Gastrocnemius medialis (tissue), 4 donors: ENCODE measurements at regions of chr4 and their contacts with region 1.

Region 1: DNA sequence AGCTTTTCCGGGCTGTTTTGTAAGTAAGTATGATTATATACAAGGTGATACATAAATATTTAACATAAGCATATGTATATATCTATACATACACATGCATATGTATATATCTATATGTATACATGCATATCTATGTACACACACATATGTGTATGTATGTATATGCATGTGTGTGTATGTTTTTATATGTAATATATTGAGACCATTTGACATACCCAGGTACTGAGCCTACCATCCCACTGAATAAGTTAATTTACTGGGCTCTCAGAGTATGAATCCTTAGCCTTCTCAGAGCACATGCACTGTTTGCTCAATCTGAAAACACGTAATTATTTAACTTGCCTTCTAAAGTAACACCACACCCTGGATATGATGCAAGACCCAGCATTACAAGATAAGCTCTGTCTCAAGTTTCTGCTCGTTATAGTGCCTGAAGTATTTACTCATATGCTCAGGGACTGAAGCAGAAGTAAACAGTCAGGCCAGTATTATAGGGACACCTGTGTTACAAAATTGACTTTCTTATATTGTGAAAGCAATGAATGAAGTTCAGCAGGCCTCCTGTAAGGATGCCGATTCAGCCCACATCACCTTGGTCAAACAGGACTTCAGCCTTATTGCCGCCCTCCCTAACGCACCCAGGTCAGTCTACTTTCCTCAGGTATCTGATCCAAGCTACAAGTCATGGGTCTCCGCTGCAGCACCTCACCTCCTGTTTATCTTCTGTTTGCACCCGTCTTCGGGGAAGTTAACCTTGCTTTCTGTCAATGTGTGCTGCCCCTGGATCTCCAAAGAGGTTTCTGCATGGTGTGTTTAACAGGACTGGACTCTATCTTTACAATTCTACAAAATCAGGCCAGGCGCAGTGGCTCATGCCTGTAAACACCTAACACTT is 43.0 kb upstream of the KLF3 start:
- DNase-seq: peak; percentile 37 to 64
- ATAC-seq: peak; percentile 98 to 99
- H3K4me3 ChIP-seq: no peak overlapping the region
- H3K27ac ChIP-seq: peak overlapping the region; percentile 64 to 86 (median 74)
- H3K4me1 ChIP-seq: peaks cover 13 to 17% of the 10 kb centered on the region in 2 donors
- H3K27me3 ChIP-seq: no peaks in the 10 kb centered on the region
- CTCF ChIP-seq: peak in 1 of 5 experiments; percentile 15
- POLR2A ChIP-seq: peak in 1 of 2 donors; percentile 23

Region 2: DNA sequence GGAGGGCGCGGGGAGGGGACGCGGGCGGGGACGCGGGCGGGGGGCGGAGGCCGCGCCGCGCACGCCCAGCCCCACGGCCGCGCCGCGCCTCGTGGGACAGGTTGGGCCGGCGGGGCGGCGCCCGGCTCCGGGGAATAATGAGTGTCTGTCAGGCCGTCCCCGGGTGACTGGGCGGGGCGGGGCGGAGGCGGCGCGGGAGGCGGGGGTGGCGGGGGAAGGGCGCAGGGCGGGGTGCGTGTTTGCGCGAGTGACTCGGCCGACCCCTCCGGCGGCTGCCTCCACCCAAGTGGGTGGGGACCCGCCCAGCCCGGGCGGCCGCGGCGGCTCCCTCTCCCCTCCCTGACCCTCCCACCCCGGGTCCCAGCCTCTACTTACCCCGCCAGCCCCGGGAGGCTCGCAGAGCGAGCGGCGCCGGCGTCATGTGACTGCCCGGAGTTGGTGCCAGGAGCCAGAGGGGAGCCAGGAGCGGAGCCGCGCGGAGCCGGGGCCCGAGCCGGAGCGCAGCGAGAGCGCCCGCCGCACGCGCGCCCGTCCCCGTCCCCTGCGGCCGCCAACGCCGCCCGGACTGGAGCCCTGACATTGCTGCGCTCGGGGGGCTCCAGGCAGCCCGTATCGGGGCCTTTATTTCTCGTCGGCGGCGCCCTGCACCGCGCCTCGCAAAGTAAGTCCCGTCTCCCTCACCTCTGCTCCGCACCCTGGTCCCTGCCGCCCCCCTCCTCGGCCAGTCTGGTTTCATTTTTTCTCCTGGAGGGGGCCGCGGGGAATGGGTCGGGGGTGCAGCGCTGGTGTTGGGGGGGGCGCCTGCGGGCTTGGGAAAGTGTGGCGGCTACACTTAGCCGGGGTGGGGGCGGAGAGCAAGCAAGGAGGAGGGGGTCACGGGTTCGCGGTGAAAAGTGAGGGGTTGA is 43.0 kb after region 1 on chr4 and contains the start of gene KLF3:
- in situ Hi-C with region 1: no loop called
- intact Hi-C with region 1: loop called (anchors 1 kb)
- DNase-seq: peak; percentile 88 to 92
- ATAC-seq: peak; percentile 65 to 70
- H3K4me3 ChIP-seq: peak within 1 kb of the TSS; percentile 94 to 99 (median 98)
- H3K27ac ChIP-seq: peak within 1 kb of the TSS; percentile 97 to 100 (median 98)
- H3K4me1 ChIP-seq: peaks cover 38 to 44% of the 10 kb centered on the region in 2 donors
- H3K27me3 ChIP-seq: no peaks in the 10 kb centered on the region
- CTCF ChIP-seq: no peak
- POLR2A ChIP-seq: peak; percentile 93 to 95
- total RNA-seq, gene KLF3: 12.7 to 26.5 (median 19.4) TPM